MCF 10A (cell line): ENCODE measurements at regions of chr17 and their contacts with region 1.

Region 1: DNA sequence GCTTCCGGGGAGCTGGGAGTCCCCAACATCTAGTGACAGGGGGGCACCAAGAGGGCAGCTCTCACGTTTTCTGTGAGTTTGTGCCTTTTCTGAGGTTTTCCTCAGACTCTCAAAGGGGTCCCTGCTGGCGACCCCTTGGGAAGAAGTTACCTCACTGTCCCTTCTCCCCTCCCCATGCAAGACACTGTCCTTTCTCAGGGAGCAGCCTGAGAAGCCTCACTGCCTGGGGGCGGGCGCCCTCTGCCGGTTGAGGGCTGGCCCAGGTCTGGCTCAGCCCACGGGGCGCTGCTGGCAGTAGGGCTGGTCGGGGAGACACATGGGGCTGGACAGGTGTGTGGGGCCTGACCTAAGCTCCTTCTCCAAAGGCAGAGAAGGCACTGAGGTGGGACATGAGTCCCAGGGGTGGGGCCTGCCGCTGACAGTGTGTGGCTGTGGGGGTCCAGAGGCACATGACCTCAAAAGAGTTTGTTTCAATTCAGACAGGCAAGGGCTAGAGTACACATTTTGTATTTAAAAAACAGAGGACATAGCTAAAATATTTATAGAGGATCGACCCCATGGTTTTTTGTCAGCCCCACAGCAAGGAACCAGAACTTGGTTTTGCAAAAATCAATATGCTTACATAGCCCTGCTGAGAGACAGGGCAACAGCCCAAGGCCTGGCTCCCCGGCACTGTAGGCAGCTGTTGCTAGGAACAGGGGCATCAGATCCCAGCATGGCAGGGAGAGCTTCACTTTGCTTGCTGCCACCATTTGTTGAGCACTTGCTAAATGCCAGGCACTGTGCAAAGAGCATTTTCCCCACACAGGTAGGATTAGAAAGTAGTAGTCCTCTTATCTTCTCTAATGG is 18.5 kb upstream of the ALDH3A1 start:
- DNase-seq: peak; percentile 74
- H3K4me3 Mint-ChIP-seq: no peak overlapping the region
- H3K27ac Mint-ChIP-seq: no peak overlapping the region
- H3K4me1 Mint-ChIP-seq: peaks cover 5% of the 10 kb centered on the region
- H3K27me3 Mint-ChIP-seq: no peaks in the 10 kb centered on the region
- CTCF ChIP-seq: peak; percentile 99

Region 2: GRCh38 chr17:19447085-19447583 is 319.5 kb before region 1 on chr17:
- CTCF ChIA-PET with region 1: interaction called, 9 read pairs
- POLR2A ChIA-PET with region 1: no interaction called
- intact Hi-C with region 1: loop called (anchors 5 kb)
- DNase-seq: peak; percentile 73
- H3K4me3 Mint-ChIP-seq: no peak overlapping the region
- H3K27ac Mint-ChIP-seq: peak overlapping the region; percentile 93
- H3K4me1 Mint-ChIP-seq: peaks cover 27% of the 10 kb centered on the region
- H3K27me3 Mint-ChIP-seq: no peaks in the 10 kb centered on the region
- CTCF ChIP-seq: peak; percentile 88

Region 3: GRCh38 chr17:19487024-19487620 is 279.5 kb before region 1 on chr17:
- CTCF ChIA-PET with region 1: no interaction called
- POLR2A ChIA-PET with region 1: no interaction called
- intact Hi-C with region 1: no loop called
- DNase-seq: no peak
- H3K4me3 Mint-ChIP-seq: no peak overlapping the region
- H3K27ac Mint-ChIP-seq: no peak overlapping the region
- H3K4me1 Mint-ChIP-seq: peaks cover 7% of the 10 kb centered on the region
- H3K27me3 Mint-ChIP-seq: no peaks in the 10 kb centered on the region
- CTCF ChIP-seq: no peak

Region 4: DNA sequence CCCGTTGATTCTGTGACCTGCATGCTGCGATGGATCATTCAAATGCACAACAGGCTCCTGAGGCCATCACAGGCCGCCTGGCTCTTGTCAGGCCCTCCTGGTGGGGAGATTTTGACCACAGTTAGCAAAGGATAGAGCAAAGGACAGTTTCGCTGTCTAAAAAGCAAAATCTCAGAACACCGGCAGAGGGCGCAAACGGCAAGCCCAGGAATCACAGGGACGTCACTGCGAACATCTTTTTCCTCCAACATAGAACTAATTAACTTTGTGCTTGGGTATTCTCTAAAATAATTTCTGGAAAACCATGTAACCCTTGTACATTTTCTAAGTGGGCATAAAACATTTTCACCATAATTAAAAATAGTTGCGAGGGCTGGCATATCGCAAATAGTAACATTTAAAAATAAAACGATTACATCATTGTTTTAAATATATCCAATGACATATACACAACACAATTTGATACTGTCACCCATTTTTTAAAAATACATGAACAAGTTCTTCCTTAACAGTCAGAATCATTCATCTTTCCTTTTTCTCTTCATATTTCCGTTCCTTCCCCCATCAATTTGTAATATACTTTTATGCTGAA is 252.7 kb before region 1 on chr17:
- CTCF ChIA-PET with region 1: interaction called, 120 read pairs
- POLR2A ChIA-PET with region 1: interaction called, 9 read pairs
- intact Hi-C with region 1: loop called (anchors 1 kb)
- DNase-seq: peak; percentile 76
- H3K4me3 Mint-ChIP-seq: no peak overlapping the region
- H3K27ac Mint-ChIP-seq: no peak overlapping the region
- H3K4me1 Mint-ChIP-seq: no peaks in the 10 kb centered on the region
- H3K27me3 Mint-ChIP-seq: no peaks in the 10 kb centered on the region
- CTCF ChIP-seq: peak; percentile 82

Region 5: GRCh38 chr17:19706791-19707727 is 59.6 kb before region 1 on chr17:
- CTCF ChIA-PET with region 1: interaction called, 10 read pairs
- POLR2A ChIA-PET with region 1: no interaction called
- intact Hi-C with region 1: no loop called
- DNase-seq: peak; percentile 87
- H3K4me3 Mint-ChIP-seq: no peak overlapping the region
- H3K27ac Mint-ChIP-seq: peak overlapping the region; percentile 27
- H3K4me1 Mint-ChIP-seq: peaks cover 10% of the 10 kb centered on the region
- H3K27me3 Mint-ChIP-seq: no peaks in the 10 kb centered on the region
- CTCF ChIP-seq: no peak

Region 6: DNA sequence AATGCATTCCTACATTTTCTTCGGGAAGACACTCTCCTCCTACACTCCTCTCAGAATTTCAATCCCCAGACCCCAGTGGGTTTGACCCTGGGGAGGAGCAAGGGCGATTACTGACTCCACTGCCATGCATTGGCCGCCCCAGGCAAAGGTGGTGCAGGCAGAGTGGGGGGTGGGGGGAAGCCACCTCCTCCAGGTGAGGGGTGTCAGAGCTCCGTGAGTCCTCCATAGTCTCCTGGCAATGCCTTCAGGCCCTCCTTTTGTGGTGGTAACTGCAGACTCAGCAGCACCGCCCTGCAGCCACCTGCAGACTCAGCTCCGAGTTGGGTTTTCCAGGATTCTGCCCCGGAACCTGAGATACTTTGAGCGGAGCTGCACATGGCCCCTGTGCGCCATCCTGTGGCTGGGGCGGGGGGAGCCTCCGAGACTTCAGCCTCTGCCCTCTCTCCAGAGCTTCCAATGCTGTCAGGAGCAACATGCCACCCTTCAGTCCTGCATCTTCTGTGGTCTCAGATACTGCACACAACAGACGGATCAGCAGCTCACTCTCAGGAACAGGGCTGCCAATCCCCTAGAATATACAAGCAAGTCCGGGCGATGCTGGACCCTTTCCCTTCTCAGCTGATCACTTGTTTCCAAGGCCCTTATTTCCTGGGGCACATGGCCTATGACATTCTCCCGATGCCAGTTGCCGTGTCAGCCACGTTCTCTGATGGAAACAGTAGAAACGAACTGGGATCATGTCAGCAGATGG is 47.9 kb before region 1 on chr17:
- CTCF ChIA-PET with region 1: interaction called, 17 read pairs
- POLR2A ChIA-PET with region 1: interaction called, 5 read pairs
- intact Hi-C with region 1: loop called (anchors 5 kb)
- DNase-seq: peak; percentile 69
- H3K4me3 Mint-ChIP-seq: peak overlapping the region; percentile 26
- H3K27ac Mint-ChIP-seq: peak overlapping the region; percentile 29
- H3K4me1 Mint-ChIP-seq: peaks cover 40% of the 10 kb centered on the region
- H3K27me3 Mint-ChIP-seq: no peaks in the 10 kb centered on the region
- CTCF ChIP-seq: peak; percentile 62

Region 7: DNA sequence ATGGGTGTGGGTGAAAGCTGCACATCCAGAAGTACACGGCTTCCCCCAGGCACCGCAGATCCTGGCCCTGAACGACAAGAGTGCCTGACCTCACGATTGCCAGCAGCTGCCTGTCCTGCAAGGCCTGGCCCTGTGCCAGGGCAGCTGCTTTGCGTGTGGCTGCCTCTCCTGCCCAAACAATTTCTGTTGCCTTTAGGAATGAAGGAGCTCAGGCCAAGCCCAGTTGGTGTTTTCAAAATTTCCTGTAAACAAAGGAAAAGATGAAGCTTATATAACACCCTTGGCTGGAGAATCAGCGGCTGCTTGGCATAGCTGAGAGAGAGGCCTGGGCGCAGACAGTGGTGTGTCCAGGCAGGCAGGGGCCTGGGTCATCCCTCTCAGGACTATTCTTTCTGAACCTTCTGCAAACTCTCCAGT is 38.6 kb before region 1 on chr17:
- CTCF ChIA-PET with region 1: interaction called, 22 read pairs
- POLR2A ChIA-PET with region 1: interaction called, 7 read pairs
- intact Hi-C with region 1: no loop called
- DNase-seq: peak; percentile 96
- H3K4me3 Mint-ChIP-seq: no peak overlapping the region
- H3K27ac Mint-ChIP-seq: peak overlapping the region; percentile 97
- H3K4me1 Mint-ChIP-seq: peaks cover 25% of the 10 kb centered on the region
- H3K27me3 Mint-ChIP-seq: no peaks in the 10 kb centered on the region
- CTCF ChIP-seq: no peak

Region 8: GRCh38 chr17:19781488-19782458 is 15.1 kb after region 1 on chr17:
- CTCF ChIA-PET with region 1: interaction called, 39 read pairs
- POLR2A ChIA-PET with region 1: no interaction called
- intact Hi-C with region 1: no loop called
- DNase-seq: no peak
- H3K4me3 Mint-ChIP-seq: no peak overlapping the region
- H3K27ac Mint-ChIP-seq: no peak overlapping the region
- H3K4me1 Mint-ChIP-seq: no peaks in the 10 kb centered on the region
- H3K27me3 Mint-ChIP-seq: no peaks in the 10 kb centered on the region
- CTCF ChIP-seq: no peak

Region 9: GRCh38 chr17:19812407-19812806 is 45.8 kb after region 1 on chr17:
- CTCF ChIA-PET with region 1: no interaction called
- POLR2A ChIA-PET with region 1: no interaction called
- intact Hi-C with region 1: no loop called
- DNase-seq: no peak
- H3K4me3 Mint-ChIP-seq: no peak overlapping the region
- H3K27ac Mint-ChIP-seq: no peak overlapping the region
- H3K4me1 Mint-ChIP-seq: no peaks in the 10 kb centered on the region
- H3K27me3 Mint-ChIP-seq: no peaks in the 10 kb centered on the region
- CTCF ChIP-seq: no peak